ENCODE measurements at regions of chrX and their contacts with region 1.

Region 1: GRCh38 chrX:65985922-65986588 is 53.8 kb downstream of the VSIG4 start:
- DNase-seq: peak; percentile 64
- ATAC-seq: peak; percentile 87
- H3K4me3 ChIP-seq: no peak overlapping the region
- H3K4me3 Mint-ChIP-seq: no peak overlapping the region
- H3K27ac ChIP-seq: peak overlapping the region in 1 of 2 donors; percentile 17
- H3K27ac Mint-ChIP-seq: peak overlapping the region; percentile 89
- H3K4me1 ChIP-seq: peaks cover 27 to 29% of the 10 kb centered on the region in 2 donors
- H3K4me1 Mint-ChIP-seq: peaks cover 40% of the 10 kb centered on the region
- H3K27me3 ChIP-seq: no peaks in the 10 kb centered on the region
- H3K27me3 Mint-ChIP-seq: no peaks in the 10 kb centered on the region
- CTCF ChIP-seq: peak; percentile 44

Region 2: GRCh38 chrX:65595460-65595876 is 390.6 kb before region 1 on chrX:
- CTCF ChIA-PET with region 1: interaction called, 23 read pairs
- POLR2A ChIA-PET with region 1: no interaction called
- intact Hi-C with region 1: loop called (anchors 1 kb)
- DNase-seq: peak; percentile 91
- ATAC-seq: peak; percentile 90
- H3K4me3 ChIP-seq: peak overlapping the region in 2 of 5 experiments; percentile 9 to 25
- H3K4me3 Mint-ChIP-seq: peak overlapping the region; percentile 84
- H3K27ac ChIP-seq: peak overlapping the region; percentile 90 to 93
- H3K27ac Mint-ChIP-seq: peak overlapping the region; percentile 96
- H3K4me1 ChIP-seq: peaks cover 42 to 45% of the 10 kb centered on the region in 2 donors
- H3K4me1 Mint-ChIP-seq: peaks cover 39% of the 10 kb centered on the region
- H3K27me3 ChIP-seq: no peaks in the 10 kb centered on the region
- H3K27me3 Mint-ChIP-seq: no peaks in the 10 kb centered on the region
- CTCF ChIP-seq: peak; percentile 84

Region 3: GRCh38 chrX:65837875-65838549 is 148.0 kb before region 1 on chrX:
- CTCF ChIA-PET with region 1: no interaction called
- POLR2A ChIA-PET with region 1: no interaction called
- intact Hi-C with region 1: no loop called
- DNase-seq: no peak
- ATAC-seq: no peak
- H3K4me3 ChIP-seq: no peak overlapping the region
- H3K4me3 Mint-ChIP-seq: no peak overlapping the region
- H3K27ac ChIP-seq: no peak overlapping the region
- H3K27ac Mint-ChIP-seq: no peak overlapping the region
- H3K4me1 ChIP-seq: no peaks in the 10 kb centered on the region
- H3K4me1 Mint-ChIP-seq: no peaks in the 10 kb centered on the region
- H3K27me3 ChIP-seq: no peaks in the 10 kb centered on the region
- H3K27me3 Mint-ChIP-seq: no peaks in the 10 kb centered on the region
- CTCF ChIP-seq: no peak

Region 4: GRCh38 chrX:65871661-65872311 is 114.3 kb before region 1 on chrX:
- CTCF ChIA-PET with region 1: interaction called, 5 read pairs
- POLR2A ChIA-PET with region 1: no interaction called
- intact Hi-C with region 1: loop called (anchors 5 kb)
- DNase-seq: peak; percentile 29
- ATAC-seq: peak; percentile 31
- H3K4me3 ChIP-seq: no peak overlapping the region
- H3K4me3 Mint-ChIP-seq: no peak overlapping the region
- H3K27ac ChIP-seq: no peak overlapping the region
- H3K27ac Mint-ChIP-seq: no peak overlapping the region
- H3K4me1 ChIP-seq: peaks cover 0 to 11% of the 10 kb centered on the region in 2 donors
- H3K4me1 Mint-ChIP-seq: peaks cover 17% of the 10 kb centered on the region
- H3K27me3 ChIP-seq: no peaks in the 10 kb centered on the region
- H3K27me3 Mint-ChIP-seq: no peaks in the 10 kb centered on the region
- CTCF ChIP-seq: no peak

Region 5: DNA sequence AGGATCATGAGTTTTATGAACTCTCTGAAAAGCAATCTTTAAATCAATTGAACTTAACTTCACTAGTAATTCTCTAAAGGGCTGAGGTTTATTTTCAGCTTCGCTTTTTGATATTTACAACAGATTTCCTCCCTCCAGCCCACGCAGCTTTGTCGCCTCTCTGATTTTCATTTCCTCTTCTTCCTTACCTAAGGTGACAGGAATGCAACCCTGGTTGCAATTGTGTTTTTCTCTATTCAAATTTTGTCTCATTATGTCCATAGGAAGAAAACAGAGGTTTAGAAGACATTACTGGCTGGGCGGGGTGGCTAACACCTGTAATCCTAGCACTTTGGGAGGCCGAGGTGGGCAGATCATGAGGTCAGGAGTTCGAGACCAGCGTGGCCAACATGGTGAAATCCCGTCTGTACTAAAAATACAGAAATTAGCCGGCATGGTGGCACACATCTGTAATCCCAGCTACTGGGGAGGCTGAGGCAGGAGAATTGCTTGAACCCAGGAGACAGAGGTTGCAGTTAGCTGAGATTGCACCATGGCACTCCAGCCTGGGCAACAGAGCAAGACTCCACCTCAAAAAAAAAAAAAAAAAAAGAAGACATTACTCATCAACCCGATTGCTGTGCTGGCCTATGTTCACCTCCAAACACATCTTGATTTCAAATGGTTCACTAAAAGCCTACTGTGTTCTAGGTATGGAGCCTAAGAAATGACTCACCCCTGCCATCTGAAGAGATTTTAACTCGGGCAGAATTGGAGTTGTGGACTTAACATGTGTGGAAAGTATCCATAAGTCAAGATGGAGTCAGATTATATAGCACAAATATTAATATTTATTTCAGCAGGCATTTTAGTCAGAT is 17.0 kb after region 1 on chrX:
- CTCF ChIA-PET with region 1: interaction called, 11 read pairs
- POLR2A ChIA-PET with region 1: interaction called, 3 read pairs
- intact Hi-C with region 1: no loop called
- DNase-seq: peak; percentile 49
- ATAC-seq: peak; percentile 72
- H3K4me3 ChIP-seq: no peak overlapping the region
- H3K4me3 Mint-ChIP-seq: peak overlapping the region; percentile 74
- H3K27ac ChIP-seq: peak overlapping the region; percentile 44 to 70
- H3K27ac Mint-ChIP-seq: peak overlapping the region; percentile 90
- H3K4me1 ChIP-seq: peaks cover 78 to 86% of the 10 kb centered on the region in 2 donors
- H3K4me1 Mint-ChIP-seq: peaks cover 88% of the 10 kb centered on the region
- H3K27me3 ChIP-seq: no peaks in the 10 kb centered on the region
- H3K27me3 Mint-ChIP-seq: no peaks in the 10 kb centered on the region
- CTCF ChIP-seq: no peak

Region 6: GRCh38 chrX:66022632-66023384 is 36.8 kb after region 1 on chrX:
- CTCF ChIA-PET with region 1: interaction called, 16 read pairs
- POLR2A ChIA-PET with region 1: no interaction called
- intact Hi-C with region 1: no loop called
- DNase-seq: no peak
- ATAC-seq: no peak
- H3K4me3 ChIP-seq: no peak overlapping the region
- H3K4me3 Mint-ChIP-seq: peak overlapping the region; percentile 26
- H3K27ac ChIP-seq: peak overlapping the region; percentile 69 to 80
- H3K27ac Mint-ChIP-seq: peak overlapping the region; percentile 87
- H3K4me1 ChIP-seq: peaks cover 72% of the 10 kb centered on the region in 2 donors
- H3K4me1 Mint-ChIP-seq: peaks cover 72% of the 10 kb centered on the region
- H3K27me3 ChIP-seq: no peaks in the 10 kb centered on the region
- H3K27me3 Mint-ChIP-seq: no peaks in the 10 kb centered on the region
- CTCF ChIP-seq: no peak